Activated CD4-positive, alpha-beta T cell treated with anti-CD3 and anti-CD28 coated beads for 36 hours (primary cell): ENCODE measurements at regions of chr1 and their contacts with region 1.

Region 1: GRCh38 chr1:154170547-154171222 is 15.8 kb upstream of the NUP210L start:
- DNase-seq: peak; percentile 83
- ATAC-seq: peak; percentile 97
- H3K4me3 Mint-ChIP-seq: peak overlapping the region; percentile 27
- H3K27ac Mint-ChIP-seq: peak overlapping the region; percentile 86
- H3K4me1 Mint-ChIP-seq: peaks cover 53% of the 10 kb centered on the region
- H3K27me3 Mint-ChIP-seq: no peaks in the 10 kb centered on the region

Region 2: GRCh38 chr1:154115180-154115579 is 55.5 kb before region 1 on chr1:
- CTCF ChIA-PET with region 1: no interaction called
- POLR2A ChIA-PET with region 1: no interaction called
- intact Hi-C with region 1: loop called in 1 of 2 experiments (anchors 5 kb)
- DNase-seq: no peak
- ATAC-seq: no peak
- H3K4me3 Mint-ChIP-seq: no peak overlapping the region
- H3K27ac Mint-ChIP-seq: no peak overlapping the region
- H3K4me1 Mint-ChIP-seq: peaks cover 13% of the 10 kb centered on the region
- H3K27me3 Mint-ChIP-seq: no peaks in the 10 kb centered on the region

Region 3: GRCh38 chr1:154157520-154158306 is 13.0 kb before region 1 on chr1:
- CTCF ChIA-PET with region 1: interaction called, 15 read pairs
- POLR2A ChIA-PET with region 1: interaction called, 7 read pairs
- intact Hi-C with region 1: loop called (anchors 1 kb)
- DNase-seq: peak; percentile 83
- ATAC-seq: peak; percentile 98
- H3K4me3 Mint-ChIP-seq: peak overlapping the region; percentile 60
- H3K27ac Mint-ChIP-seq: peak overlapping the region; percentile 96
- H3K4me1 Mint-ChIP-seq: peaks cover 71% of the 10 kb centered on the region
- H3K27me3 Mint-ChIP-seq: no peaks in the 10 kb centered on the region

Region 4: GRCh38 chr1:154304664-154305337 is 134.1 kb after region 1 on chr1:
- CTCF ChIA-PET with region 1: no interaction called
- POLR2A ChIA-PET with region 1: interaction called, 3 read pairs
- intact Hi-C with region 1: loop called in 1 of 2 experiments (anchors 1 kb)
- DNase-seq: peak; percentile 81
- ATAC-seq: peak; percentile 95
- H3K4me3 Mint-ChIP-seq: no peak overlapping the region
- H3K27ac Mint-ChIP-seq: peak overlapping the region; percentile 27
- H3K4me1 Mint-ChIP-seq: peaks cover 24% of the 10 kb centered on the region
- H3K27me3 Mint-ChIP-seq: no peaks in the 10 kb centered on the region